ENCODE measurements at regions of chr16 and their contacts with region 1.

Region 1: DNA sequence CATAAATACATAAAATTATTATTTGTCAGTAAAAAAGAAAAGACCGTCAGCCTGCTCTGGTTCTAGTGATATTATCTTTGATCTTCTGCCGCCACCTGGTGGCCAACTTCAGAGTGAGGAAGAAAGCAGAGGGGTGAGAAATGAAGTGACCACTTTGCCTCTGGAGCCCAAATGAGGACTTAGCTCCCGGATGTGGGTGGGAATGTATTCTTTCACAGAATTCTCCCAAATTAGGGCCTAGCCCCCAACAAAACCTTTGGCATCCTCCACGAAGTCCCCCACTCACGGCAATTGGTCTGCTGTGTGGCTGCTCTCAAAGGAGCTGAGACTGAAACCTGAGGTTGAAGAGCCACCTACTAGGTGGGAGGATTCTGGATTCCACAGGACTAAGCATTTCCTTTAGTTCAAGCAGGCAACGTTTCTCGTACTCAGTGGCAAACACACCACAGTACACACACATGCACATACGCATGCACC is 4.9 kb upstream of the ZNF267 start:
- DNase-seq: peak; percentile 90
- ATAC-seq: peak; percentile 54
- H3K4me3 Mint-ChIP-seq: peak overlapping the region; percentile 63
- H3K27ac Mint-ChIP-seq: peak overlapping the region; percentile 91
- H3K4me1 Mint-ChIP-seq: peaks cover 55% of the 10 kb centered on the region
- H3K27me3 Mint-ChIP-seq: no peaks in the 10 kb centered on the region

Region 2: DNA sequence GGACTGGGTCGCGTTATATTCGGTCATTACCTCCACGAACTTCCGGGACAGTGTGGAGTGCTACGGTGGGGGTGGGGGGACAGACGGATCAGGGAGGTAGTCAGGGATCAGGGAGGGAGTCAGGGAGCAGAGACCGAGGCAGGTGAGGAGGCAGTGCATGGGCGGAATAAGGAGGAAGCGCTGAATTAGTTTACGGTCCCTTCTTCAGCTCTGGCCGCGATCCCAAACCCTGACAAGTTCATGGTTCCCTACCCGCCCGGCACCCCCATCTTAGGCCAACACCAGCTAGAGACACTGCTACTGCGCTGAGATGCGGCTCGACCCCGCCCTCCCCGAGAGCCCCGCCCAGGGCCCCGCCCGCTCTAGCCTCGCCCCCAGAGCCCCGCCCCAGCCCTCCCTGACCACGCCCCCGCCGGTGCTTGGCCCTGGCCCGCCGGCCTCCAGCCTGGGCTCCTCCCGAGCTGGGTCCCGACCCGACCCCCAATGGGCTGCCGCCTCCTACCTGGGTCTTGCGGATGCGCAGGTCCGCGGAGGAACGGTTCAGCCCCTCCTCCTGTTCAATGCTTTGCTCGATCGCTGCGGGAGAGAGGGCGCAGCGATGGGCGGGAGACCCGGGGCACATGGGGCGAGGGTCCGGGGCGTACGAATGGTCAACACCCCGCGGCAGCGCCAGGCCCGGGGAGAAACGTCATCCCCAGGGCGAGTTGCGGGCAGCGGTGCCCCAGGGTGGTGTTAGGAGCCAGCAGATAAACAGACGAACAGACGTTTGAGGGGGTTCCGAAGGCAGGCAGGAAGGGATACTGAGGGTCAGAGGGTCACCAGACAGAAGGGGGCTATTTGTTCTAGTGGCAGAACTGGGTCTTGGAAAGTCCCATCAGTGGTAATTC is 871.5 kb before region 1 on chr16:
- CTCF ChIA-PET with region 1: no interaction called
- POLR2A ChIA-PET with region 1: interaction called, 3 read pairs
- intact Hi-C with region 1: loop called in 1 of 2 experiments (anchors 10 kb)
- DNase-seq: peak; percentile 94
- ATAC-seq: peak; percentile 95
- H3K4me3 Mint-ChIP-seq: peak overlapping the region; percentile 72
- H3K27ac Mint-ChIP-seq: no peak overlapping the region
- H3K4me1 Mint-ChIP-seq: peaks cover 16% of the 10 kb centered on the region
- H3K27me3 Mint-ChIP-seq: peaks cover 3% of the 10 kb centered on the region

Region 3: GRCh38 chr16:31202414-31203375 is 666.0 kb before region 1 on chr16 and contains the start of gene PYCARD:
- CTCF ChIA-PET with region 1: interaction called, 4 read pairs
- POLR2A ChIA-PET with region 1: no interaction called
- intact Hi-C with region 1: loop called in 1 of 2 experiments (anchors 5 kb)
- DNase-seq: peak; percentile 53
- ATAC-seq: peak; percentile 7
- H3K4me3 Mint-ChIP-seq: peak within 1 kb of the TSS; percentile 71
- H3K27ac Mint-ChIP-seq: peak within 1 kb of the TSS; percentile 52
- H3K4me1 Mint-ChIP-seq: peaks cover 47% of the 10 kb centered on the region
- H3K27me3 Mint-ChIP-seq: peaks cover 3% of the 10 kb centered on the region
- total RNA-seq, gene PYCARD: 5.7 TPM

Region 4: GRCh38 chr16:31265329-31266245 is 603.1 kb before region 1 on chr16:
- CTCF ChIA-PET with region 1: no interaction called
- POLR2A ChIA-PET with region 1: no interaction called
- intact Hi-C with region 1: loop called in 1 of 2 experiments (anchors 5 kb)
- DNase-seq: peak; percentile 91
- ATAC-seq: peak; percentile 97
- H3K4me3 Mint-ChIP-seq: peak overlapping the region; percentile 10
- H3K27ac Mint-ChIP-seq: peak overlapping the region; percentile 86
- H3K4me1 Mint-ChIP-seq: peaks cover 40% of the 10 kb centered on the region
- H3K27me3 Mint-ChIP-seq: peaks cover 6% of the 10 kb centered on the region

Region 5: DNA sequence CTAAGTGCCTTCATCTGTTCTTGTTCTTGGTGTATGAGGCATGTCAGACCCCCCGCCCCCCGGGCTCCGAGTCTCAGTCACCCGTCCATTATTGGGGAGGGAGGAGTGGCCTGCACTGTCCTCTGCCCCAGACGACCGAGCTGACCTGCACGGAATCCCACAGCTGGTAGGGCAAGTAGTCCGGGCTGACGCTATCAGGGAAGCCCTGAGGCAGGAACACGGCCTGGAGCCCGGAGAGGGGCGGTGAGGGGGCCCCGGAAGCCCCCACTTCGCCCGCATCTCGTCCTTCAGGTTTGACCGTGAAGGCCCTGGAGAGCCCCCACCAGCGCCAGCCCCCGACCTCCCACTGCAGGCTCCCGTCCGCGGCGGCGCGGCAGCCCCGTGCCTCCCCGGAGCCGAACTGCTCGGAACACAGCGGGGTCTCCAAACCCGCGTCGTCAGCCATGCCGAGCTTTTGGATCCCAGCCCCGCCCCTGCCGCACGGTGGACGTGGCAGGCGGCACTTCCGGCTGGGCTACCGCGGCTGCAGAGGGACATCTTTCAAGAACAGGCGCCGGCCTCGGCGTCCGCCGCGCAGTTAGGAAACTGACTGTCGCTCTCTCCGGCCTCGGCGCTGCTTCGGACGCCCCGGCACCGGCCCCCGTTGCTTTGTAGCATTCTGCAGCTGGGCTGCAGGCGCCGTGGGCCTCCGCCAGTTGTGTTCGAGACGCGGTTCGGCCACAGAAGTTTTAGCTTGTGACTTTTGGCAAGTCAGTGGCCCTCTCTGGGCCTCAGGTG is 360.6 kb before region 1 on chr16 and contains the start of gene RUSF1:
- CTCF ChIA-PET with region 1: interaction called, 3 read pairs
- POLR2A ChIA-PET with region 1: interaction called, 8 read pairs
- intact Hi-C with region 1: loop called (anchors 1 to 5 kb)
- DNase-seq: peak; percentile 94
- ATAC-seq: peak; percentile 77
- H3K4me3 Mint-ChIP-seq: peak within 1 kb of the TSS; percentile 88
- H3K27ac Mint-ChIP-seq: peak within 1 kb of the TSS; percentile 98
- H3K4me1 Mint-ChIP-seq: peaks cover 47% of the 10 kb centered on the region
- H3K27me3 Mint-ChIP-seq: no peaks in the 10 kb centered on the region
- total RNA-seq, gene RUSF1: 36.3 to 37.7 TPM

Region 6: GRCh38 chr16:31880322-31880979 is 11.7 kb after region 1 on chr16:
- CTCF ChIA-PET with region 1: interaction called, 24 read pairs
- POLR2A ChIA-PET with region 1: interaction called, 29 read pairs
- intact Hi-C with region 1: loop called (anchors 1 kb)
- DNase-seq: peak; percentile 69
- ATAC-seq: peak; percentile 78
- H3K4me3 Mint-ChIP-seq: peak overlapping the region; percentile 51
- H3K27ac Mint-ChIP-seq: peak overlapping the region; percentile 97
- H3K4me1 Mint-ChIP-seq: peaks cover 85% of the 10 kb centered on the region
- H3K27me3 Mint-ChIP-seq: no peaks in the 10 kb centered on the region

Measured in activated CD4-positive, alpha-beta T cell treated with anti-CD3 and anti-CD28 coated beads for 36 hours (primary cell).